Heart left ventricle (tissue), 16 donors: ENCODE measurements at regions of chr4 and their contacts with region 1.

Region 1: GRCh38 chr4:182925298-182925738 is 8.1 kb upstream of the DCTD start:
- DNase-seq: peak; percentile 56 to 83 (median 62)
- ATAC-seq: peak; percentile 61 to 87 (median 86)
- H3K4me3 ChIP-seq: no peak overlapping the region
- H3K27ac ChIP-seq: no peak overlapping the region
- H3K4me1 ChIP-seq: no peaks in the 10 kb centered on the region
- H3K27me3 ChIP-seq: no peaks in the 10 kb centered on the region
- CTCF ChIP-seq: peak; percentile 33 to 66 (median 48)
- POLR2A ChIP-seq: no peak

Region 2: DNA sequence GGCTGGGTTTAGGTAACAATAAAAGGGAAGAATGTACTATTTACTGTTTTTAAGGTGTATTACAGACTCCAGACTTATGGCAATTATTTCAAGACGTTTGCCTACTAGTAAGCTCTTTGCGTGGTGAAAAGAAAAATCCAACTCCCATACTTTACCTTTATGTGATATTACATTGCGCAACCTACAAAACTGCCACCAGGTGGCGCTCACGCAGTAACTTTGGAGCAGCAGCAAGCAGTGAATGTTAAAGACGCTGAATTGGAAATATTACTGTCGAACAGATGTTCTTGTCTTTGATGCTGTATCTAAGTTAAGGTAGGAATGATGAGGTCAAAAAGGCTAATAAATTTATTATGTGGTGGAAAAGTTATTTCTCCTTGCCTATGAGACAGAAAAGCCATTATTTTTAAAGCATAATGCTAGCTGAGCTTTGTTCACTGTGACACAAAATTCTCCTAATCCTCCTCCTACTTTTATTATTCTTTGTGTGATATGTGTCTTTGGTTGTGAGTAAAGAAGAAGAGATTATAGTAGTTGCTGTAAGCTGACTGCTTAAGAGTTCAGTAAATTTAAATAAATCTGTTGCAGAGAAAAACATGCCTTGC is 1782.0 kb before region 1 on chr4:
- intact Hi-C with region 1: loop called in 1 of 10 experiments (anchors 10 kb)
- DNase-seq: peak; percentile 47 to 80 (median 67)
- ATAC-seq: peak in 3 of 4 donors; percentile 32 to 65 (median 60)
- H3K4me3 ChIP-seq: no peak overlapping the region
- H3K27ac ChIP-seq: no peak overlapping the region
- H3K4me1 ChIP-seq: no peaks in the 10 kb centered on the region
- H3K27me3 ChIP-seq: peaks cover 0 to 15% (median 0%) of the 10 kb centered on the region in 9 donors
- CTCF ChIP-seq: peak; percentile 82 to 95 (median 90)
- POLR2A ChIP-seq: no peak

Region 3: GRCh38 chr4:181569553-181569952 is 1355.8 kb before region 1 on chr4:
- intact Hi-C with region 1: loop called in 2 of 10 experiments (anchors 5 to 10 kb)
- DNase-seq: no peak
- ATAC-seq: peak in 3 of 4 donors; percentile 39 to 64 (median 56)
- H3K4me3 ChIP-seq: no peak overlapping the region
- H3K27ac ChIP-seq: no peak overlapping the region
- H3K4me1 ChIP-seq: no peaks in the 10 kb centered on the region
- H3K27me3 ChIP-seq: no peaks in the 10 kb centered on the region
- CTCF ChIP-seq: peak in 11 of 12 donors; percentile 13 to 56 (median 43)
- POLR2A ChIP-seq: no peak

Region 4: DNA sequence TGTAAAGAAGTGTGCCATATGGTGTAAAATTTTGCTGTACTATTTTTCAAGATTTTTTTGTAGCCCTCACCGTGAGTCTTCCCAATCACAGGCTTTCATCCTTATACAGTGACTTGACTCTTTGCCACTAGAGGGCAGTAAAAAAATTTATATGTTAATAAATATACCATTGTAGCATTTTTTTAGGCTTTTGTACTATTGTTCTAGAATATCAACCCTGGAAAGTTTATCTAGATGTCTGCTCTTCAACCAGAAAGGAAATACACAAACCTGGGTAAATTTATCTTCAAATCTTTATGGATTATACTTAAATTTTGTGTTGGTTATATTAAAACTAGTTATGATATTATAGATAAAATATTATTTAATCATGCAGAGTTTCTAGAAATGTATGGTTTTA is 446.8 kb before region 1 on chr4:
- intact Hi-C with region 1: loop called in 2 of 10 experiments (anchors 2 to 10 kb)
- DNase-seq: no peak
- ATAC-seq: peak in 1 of 4 donors; percentile 39
- H3K4me3 ChIP-seq: no peak overlapping the region
- H3K27ac ChIP-seq: no peak overlapping the region
- H3K4me1 ChIP-seq: no peaks in the 10 kb centered on the region
- H3K27me3 ChIP-seq: no peaks in the 10 kb centered on the region
- CTCF ChIP-seq: peak; percentile 46 to 79 (median 67)
- POLR2A ChIP-seq: no peak

Region 5: GRCh38 chr4:182486881-182487280 is 438.4 kb before region 1 on chr4:
- intact Hi-C with region 1: loop called in 1 of 10 experiments (anchors 10 kb)
- DNase-seq: no peak
- ATAC-seq: no peak
- H3K4me3 ChIP-seq: no peak overlapping the region
- H3K27ac ChIP-seq: no peak overlapping the region
- H3K4me1 ChIP-seq: peaks cover 0 to 3% (median 0%) of the 10 kb centered on the region in 12 donors
- H3K27me3 ChIP-seq: no peaks in the 10 kb centered on the region
- CTCF ChIP-seq: no peak
- POLR2A ChIP-seq: no peak